B cell (primary cell): ENCODE measurements at regions of chr12 and their contacts with region 1.

Region 1: GRCh38 chr12:56468216-56469006 is at the start of gene SPRYD4:
- DNase-seq: peak; percentile 97
- ATAC-seq: peak; percentile 93
- H3K4me3 ChIP-seq: peak within 1 kb of the TSS; percentile 91 to 100 (median 96)
- H3K4me3 Mint-ChIP-seq: peak within 1 kb of the TSS; percentile 93
- H3K27ac ChIP-seq: peak within 1 kb of the TSS; percentile 86 to 87
- H3K27ac Mint-ChIP-seq: peak within 1 kb of the TSS; percentile 98
- H3K4me1 ChIP-seq: peaks cover 12 to 28% of the 10 kb centered on the region in 2 donors
- H3K4me1 Mint-ChIP-seq: peaks cover 28% of the 10 kb centered on the region
- H3K27me3 ChIP-seq: no peaks in the 10 kb centered on the region
- H3K27me3 Mint-ChIP-seq: no peaks in the 10 kb centered on the region
- CTCF ChIP-seq: peak; percentile 30
- total RNA-seq, gene SPRYD4: 7.4 and 8.0 TPM in 2 replicates

Region 2: DNA sequence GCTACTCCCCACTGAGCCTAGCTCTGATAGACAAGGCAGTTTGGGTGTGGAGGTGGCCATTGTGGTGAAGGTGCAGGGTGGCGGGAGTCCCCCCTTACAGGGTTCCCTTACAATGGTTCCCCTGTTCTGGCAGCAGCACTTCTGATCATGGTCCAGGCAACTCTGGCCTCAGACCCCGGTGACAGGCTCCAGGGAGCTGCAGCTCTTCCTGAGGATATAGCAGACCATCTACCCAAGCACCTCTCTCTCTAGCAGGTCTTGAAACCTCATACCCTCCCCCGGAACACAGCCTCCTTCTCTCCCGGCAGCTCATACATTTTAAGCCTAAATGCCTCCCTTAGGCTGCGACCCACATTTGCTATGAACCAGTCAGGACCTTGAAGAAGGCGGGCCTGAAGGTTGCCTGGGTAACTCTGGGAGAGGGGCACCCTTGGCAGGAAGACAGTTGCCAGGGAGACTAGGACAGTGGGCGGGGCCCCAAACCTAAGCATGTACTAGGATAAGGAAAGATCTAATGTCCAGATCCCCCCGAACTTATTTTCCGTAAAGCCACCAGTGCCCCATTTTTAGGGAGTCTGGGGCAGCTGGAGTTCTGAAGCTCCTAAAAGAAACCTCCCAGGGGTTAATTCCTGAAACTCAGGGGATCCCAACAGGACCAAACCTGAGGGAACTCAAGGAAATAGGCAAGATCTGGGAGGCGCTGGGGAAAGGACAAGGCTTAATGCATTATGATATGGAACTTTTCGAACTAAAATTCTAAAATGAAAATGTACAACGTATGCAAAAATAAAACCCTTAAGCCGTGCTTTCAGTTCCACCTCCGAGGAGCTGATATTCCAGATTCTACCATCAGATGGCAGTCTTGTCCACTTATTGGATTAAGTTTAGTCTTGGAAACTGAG is 730.0 kb before region 1 on chr12:
- CTCF ChIA-PET with region 1: no interaction called
- POLR2A ChIA-PET with region 1: no interaction called
- intact Hi-C with region 1: loop called (anchors 5 kb)
- DNase-seq: peak; percentile 89
- ATAC-seq: peak; percentile 81
- H3K4me3 ChIP-seq: peak overlapping the region; percentile 61 to 97 (median 89)
- H3K4me3 Mint-ChIP-seq: peak overlapping the region; percentile 89
- H3K27ac ChIP-seq: peak overlapping the region; percentile 70 to 84
- H3K27ac Mint-ChIP-seq: peak overlapping the region; percentile 91
- H3K4me1 ChIP-seq: peaks cover 15 to 20% of the 10 kb centered on the region in 2 donors
- H3K4me1 Mint-ChIP-seq: peaks cover 21% of the 10 kb centered on the region
- H3K27me3 ChIP-seq: no peaks in the 10 kb centered on the region
- H3K27me3 Mint-ChIP-seq: no peaks in the 10 kb centered on the region
- CTCF ChIP-seq: peak; percentile 91

Region 3: GRCh38 chr12:56258057-56258819 is 210.2 kb before region 1 on chr12 and contains the start of gene ANKRD52:
- CTCF ChIA-PET with region 1: interaction called, 14 read pairs
- POLR2A ChIA-PET with region 1: interaction called, 3 read pairs
- intact Hi-C with region 1: loop called (anchors 1 kb)
- DNase-seq: peak; percentile 93
- ATAC-seq: peak; percentile 95
- H3K4me3 ChIP-seq: peak within 1 kb of the TSS; percentile 32 to 99 (median 77)
- H3K4me3 Mint-ChIP-seq: peak within 1 kb of the TSS; percentile 90
- H3K27ac ChIP-seq: peak within 1 kb of the TSS; percentile 60 to 81
- H3K27ac Mint-ChIP-seq: peak within 1 kb of the TSS; percentile 92
- H3K4me1 ChIP-seq: peaks cover 16 to 21% of the 10 kb centered on the region in 2 donors
- H3K4me1 Mint-ChIP-seq: peaks cover 18% of the 10 kb centered on the region
- H3K27me3 ChIP-seq: no peaks in the 10 kb centered on the region
- H3K27me3 Mint-ChIP-seq: no peaks in the 10 kb centered on the region
- CTCF ChIP-seq: peak; percentile 78
- total RNA-seq, gene ANKRD52: 46.5 and 54.6 TPM in 2 replicates

Region 4: DNA sequence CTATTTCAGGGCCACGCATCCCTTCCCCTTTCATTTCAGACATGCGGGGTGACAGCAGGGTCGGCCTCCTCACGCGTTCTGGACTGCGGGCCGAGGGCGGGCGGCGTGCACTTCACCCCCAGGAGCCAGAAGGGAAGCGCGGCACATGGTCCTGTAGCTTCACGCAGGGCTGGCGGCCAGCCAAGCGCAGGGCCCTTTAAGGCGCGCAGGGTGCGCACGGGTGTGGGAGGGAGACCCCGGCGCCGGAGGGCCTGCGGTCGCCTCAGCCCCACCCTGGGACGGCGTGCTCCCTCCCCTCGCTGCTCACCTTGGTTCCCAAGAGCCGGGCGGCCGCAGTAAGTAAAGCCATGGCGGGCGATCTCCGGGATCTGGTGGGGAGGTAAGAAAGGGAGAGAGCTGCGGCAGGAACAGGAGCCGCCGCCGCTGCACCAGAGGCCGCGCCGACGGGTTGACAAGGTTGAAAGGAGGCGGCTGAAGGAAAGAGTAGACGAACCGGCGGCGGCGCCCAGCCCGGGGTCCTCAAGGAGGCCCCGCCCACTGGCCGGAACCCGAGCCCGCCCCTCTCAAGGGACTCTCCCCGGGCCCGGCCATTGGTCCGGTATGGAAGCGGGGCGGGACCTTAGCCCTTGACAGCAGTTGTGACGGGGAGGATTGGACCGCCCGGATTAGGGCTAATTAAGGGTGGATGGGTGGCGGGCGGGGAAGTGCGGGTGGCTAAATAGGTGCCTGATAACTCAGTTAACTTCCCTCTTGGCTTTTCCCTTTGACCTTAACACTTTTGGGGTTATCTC is 168.4 kb before region 1 on chr12 and contains the start of gene CS:
- CTCF ChIA-PET with region 1: interaction called, 3 read pairs
- POLR2A ChIA-PET with region 1: no interaction called
- intact Hi-C with region 1: loop called (anchors 1 kb)
- DNase-seq: peak; percentile 98
- ATAC-seq: peak; percentile 96
- H3K4me3 ChIP-seq: peak within 1 kb of the TSS; percentile 78 to 91 (median 83)
- H3K4me3 Mint-ChIP-seq: peak within 1 kb of the TSS; percentile 98
- H3K27ac ChIP-seq: peak within 1 kb of the TSS; percentile 92 to 95
- H3K27ac Mint-ChIP-seq: peak within 1 kb of the TSS; percentile 97
- H3K4me1 ChIP-seq: peaks cover 51 to 61% of the 10 kb centered on the region in 2 donors
- H3K4me1 Mint-ChIP-seq: peaks cover 57% of the 10 kb centered on the region
- H3K27me3 ChIP-seq: no peaks in the 10 kb centered on the region
- H3K27me3 Mint-ChIP-seq: no peaks in the 10 kb centered on the region
- CTCF ChIP-seq: no peak
- total RNA-seq, gene CS: 151 and 154 TPM in 2 replicates

Region 5: DNA sequence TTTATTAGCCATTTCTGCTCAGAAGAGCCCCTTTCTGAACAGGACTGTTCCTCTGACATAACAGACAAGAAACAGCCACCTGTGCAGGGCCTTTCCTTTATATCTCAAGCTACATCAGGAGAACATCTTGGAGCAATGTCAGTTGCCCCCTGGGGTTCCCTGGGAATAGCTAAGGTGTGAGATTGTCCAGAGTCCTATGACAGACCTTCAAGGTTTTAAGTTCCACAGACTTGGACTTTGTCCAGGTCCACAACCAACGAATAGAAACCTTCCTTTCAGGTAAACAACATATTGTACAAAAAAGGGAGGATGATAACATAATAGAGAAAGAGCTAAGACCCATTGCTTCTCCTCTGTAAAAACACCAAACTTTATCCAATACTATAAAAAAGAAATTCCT is 126.8 kb before region 1 on chr12:
- CTCF ChIA-PET with region 1: interaction called, 45 read pairs
- POLR2A ChIA-PET with region 1: interaction called, 4 read pairs
- intact Hi-C with region 1: loop called (anchors 1 kb)
- DNase-seq: no peak
- ATAC-seq: no peak
- H3K4me3 ChIP-seq: no peak overlapping the region
- H3K4me3 Mint-ChIP-seq: no peak overlapping the region
- H3K27ac ChIP-seq: peak overlapping the region in 1 of 2 donors; percentile 14
- H3K27ac Mint-ChIP-seq: peak overlapping the region; percentile 6
- H3K4me1 ChIP-seq: peaks cover 26 to 33% of the 10 kb centered on the region in 2 donors
- H3K4me1 Mint-ChIP-seq: peaks cover 33% of the 10 kb centered on the region
- H3K27me3 ChIP-seq: no peaks in the 10 kb centered on the region
- H3K27me3 Mint-ChIP-seq: no peaks in the 10 kb centered on the region
- CTCF ChIP-seq: no peak

Region 6: GRCh38 chr12:56488041-56488955 is 19.9 kb after region 1 on chr12 and contains the start of gene GLS2:
- CTCF ChIA-PET with region 1: interaction called, 5 read pairs
- POLR2A ChIA-PET with region 1: interaction called, 3 read pairs
- intact Hi-C with region 1: loop called (anchors 1 kb)
- DNase-seq: peak; percentile 85
- ATAC-seq: peak; percentile 99
- H3K4me3 ChIP-seq: peak within 1 kb of the TSS; percentile 26 to 79 (median 73)
- H3K4me3 Mint-ChIP-seq: peak within 1 kb of the TSS; percentile 91
- H3K27ac ChIP-seq: no peak within 1 kb of the TSS
- H3K27ac Mint-ChIP-seq: peak within 1 kb of the TSS; percentile 80
- H3K4me1 ChIP-seq: peaks cover 0 to 19% of the 10 kb centered on the region in 2 donors
- H3K4me1 Mint-ChIP-seq: peaks cover 19% of the 10 kb centered on the region
- H3K27me3 ChIP-seq: peaks cover 0 to 9% (median 5%) of the 10 kb centered on the region in 4 experiments
- H3K27me3 Mint-ChIP-seq: peaks cover 17% of the 10 kb centered on the region
- CTCF ChIP-seq: no peak
- total RNA-seq, gene GLS2: 5.3 and 7.2 TPM in 2 replicates